ENCODE measurements at regions of chr9 and their contacts with region 1.

Region 1: DNA sequence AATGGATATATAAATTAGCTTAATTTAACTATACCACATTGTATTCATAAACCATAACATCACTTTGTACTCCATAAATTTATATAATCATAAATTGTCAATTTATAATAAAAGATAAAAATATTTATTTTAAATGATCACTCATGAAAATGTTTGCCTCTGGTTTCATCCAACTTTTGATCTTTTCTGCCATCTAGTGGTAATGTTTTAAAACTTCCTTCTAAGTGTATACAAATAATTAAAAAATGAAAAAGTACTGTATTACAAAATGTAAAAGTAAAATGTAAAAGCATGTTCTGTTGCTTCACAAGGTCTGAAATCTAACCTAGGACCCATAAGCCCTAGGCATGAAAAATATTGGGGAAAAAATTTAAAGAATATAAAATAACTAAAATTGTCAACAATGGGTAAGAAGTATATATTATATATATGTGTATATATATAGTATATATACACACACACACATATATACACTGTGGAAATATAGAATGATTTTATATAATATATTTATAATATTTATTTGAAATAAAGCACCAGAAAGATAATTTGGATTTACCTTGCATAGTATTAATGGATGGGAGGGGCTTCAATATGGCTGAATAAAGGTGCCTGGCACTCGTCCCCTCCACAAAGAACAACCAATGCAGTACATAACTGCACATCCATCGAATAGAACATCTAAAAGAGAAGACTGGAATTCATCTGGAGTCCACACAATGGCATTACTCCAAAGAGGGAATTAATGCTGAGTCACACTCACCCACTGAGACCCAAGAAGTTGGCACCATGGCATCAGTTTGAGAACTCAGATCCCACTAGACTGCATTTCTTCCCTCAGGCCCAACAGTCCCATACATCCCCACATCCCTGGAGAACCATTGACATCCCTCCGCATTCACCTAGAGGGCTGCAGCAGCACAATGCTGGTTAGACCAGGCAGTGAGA is 32.5 kb downstream of the ANXA1 start:
- DNase-seq: no peak
- H3K4me3 ChIP-seq: no peak overlapping the region
- H3K27ac ChIP-seq: no peak overlapping the region
- H3K4me1 ChIP-seq: peaks cover 2% of the 10 kb centered on the region
- H3K27me3 ChIP-seq: no peaks in the 10 kb centered on the region
- CTCF ChIP-seq: peak; percentile 12 to 77 (median 59)
- POLR2A ChIP-seq: no peak

Region 2: DNA sequence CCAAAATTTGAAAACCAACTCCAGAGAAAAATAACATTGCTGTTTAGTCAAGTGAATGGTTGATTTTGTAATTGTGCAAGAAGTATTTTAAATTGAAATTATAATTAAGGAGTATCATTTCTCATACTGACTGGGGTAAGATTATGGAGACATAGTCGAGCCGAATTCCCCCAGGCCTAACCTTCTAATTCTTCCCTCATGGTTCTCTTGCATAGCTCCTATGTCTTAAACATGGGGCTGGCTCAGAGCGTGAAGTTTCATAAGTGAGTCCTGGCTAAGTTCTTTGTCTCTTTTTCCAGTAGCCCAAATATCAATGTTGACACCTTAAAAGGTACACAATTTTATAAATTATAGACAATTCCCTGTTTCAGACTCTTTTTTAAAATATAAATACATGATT is 79.3 kb before region 1 on chr9:
- intact Hi-C with region 1: loop called (anchors 5 kb)
- DNase-seq: no peak
- H3K4me3 ChIP-seq: no peak overlapping the region
- H3K27ac ChIP-seq: no peak overlapping the region
- H3K4me1 ChIP-seq: no peaks in the 10 kb centered on the region
- H3K27me3 ChIP-seq: no peaks in the 10 kb centered on the region
- CTCF ChIP-seq: no peak
- POLR2A ChIP-seq: no peak

Region 3: DNA sequence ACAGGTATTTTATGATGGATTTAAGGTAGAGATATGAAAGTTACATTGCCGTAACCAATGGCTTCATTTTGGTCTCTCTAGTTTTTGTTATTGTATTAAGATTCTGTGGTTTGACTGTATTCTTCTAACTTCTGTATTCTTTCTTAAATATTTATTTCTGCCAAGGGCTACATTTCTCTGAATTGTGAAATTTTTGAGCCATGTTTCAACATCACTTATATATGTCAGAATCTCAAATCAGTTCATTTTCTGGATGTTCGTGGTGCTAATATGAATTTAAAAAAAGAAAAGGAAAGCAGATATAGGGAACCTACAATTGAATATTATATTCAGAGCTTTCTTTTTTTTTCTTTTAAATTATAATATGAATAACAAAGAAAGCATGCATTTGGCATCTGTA is 110.1 kb after region 1 on chr9:
- intact Hi-C with region 1: no loop called
- DNase-seq: no peak
- H3K4me3 ChIP-seq: no peak overlapping the region
- H3K27ac ChIP-seq: no peak overlapping the region
- H3K4me1 ChIP-seq: no peaks in the 10 kb centered on the region
- H3K27me3 ChIP-seq: no peaks in the 10 kb centered on the region
- CTCF ChIP-seq: no peak
- POLR2A ChIP-seq: no peak